ENCODE measurements at regions of chr1 and their contacts with region 1.

Region 1: GRCh38 chr1:179081687-179082332 is at the start of gene TOR3A:
- DNase-seq: peak; percentile 82
- H3K4me3 ChIP-seq: peak within 1 kb of the TSS; percentile 84
- H3K27ac ChIP-seq: peak within 1 kb of the TSS; percentile 72
- H3K4me1 ChIP-seq: peaks cover 6% of the 10 kb centered on the region
- H3K27me3 ChIP-seq: no peaks in the 10 kb centered on the region
- CTCF ChIP-seq: no peak
- total RNA-seq, gene TOR3A: 18.0 and 21.0 TPM in 2 replicates

Region 2: DNA sequence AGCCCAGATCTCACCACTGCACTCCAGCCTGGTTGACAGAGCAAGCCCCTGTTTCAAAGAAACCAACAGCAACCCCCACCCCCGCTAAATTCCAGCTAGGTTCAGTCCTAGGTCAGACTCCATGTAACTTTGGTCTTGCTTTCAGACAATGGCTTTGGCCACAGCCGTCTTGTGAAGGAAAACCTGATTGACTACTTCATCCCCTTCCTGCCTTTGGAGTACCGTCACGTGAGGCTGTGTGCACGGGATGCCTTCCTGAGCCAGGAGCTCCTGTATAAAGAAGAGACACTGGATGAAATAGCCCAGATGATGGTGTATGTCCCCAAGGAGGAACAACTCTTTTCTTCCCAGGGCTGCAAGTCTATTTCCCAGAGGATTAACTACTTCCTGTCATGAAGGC is 13.0 kb after region 1 on chr1:
- CTCF ChIA-PET with region 1: no interaction called
- POLR2A ChIA-PET with region 1: no interaction called
- intact Hi-C with region 1: no loop called
- DNase-seq: no peak
- H3K4me3 ChIP-seq: no peak overlapping the region
- H3K27ac ChIP-seq: no peak overlapping the region
- H3K4me1 ChIP-seq: peaks cover 17% of the 10 kb centered on the region
- H3K27me3 ChIP-seq: no peaks in the 10 kb centered on the region
- CTCF ChIP-seq: no peak

Region 3: DNA sequence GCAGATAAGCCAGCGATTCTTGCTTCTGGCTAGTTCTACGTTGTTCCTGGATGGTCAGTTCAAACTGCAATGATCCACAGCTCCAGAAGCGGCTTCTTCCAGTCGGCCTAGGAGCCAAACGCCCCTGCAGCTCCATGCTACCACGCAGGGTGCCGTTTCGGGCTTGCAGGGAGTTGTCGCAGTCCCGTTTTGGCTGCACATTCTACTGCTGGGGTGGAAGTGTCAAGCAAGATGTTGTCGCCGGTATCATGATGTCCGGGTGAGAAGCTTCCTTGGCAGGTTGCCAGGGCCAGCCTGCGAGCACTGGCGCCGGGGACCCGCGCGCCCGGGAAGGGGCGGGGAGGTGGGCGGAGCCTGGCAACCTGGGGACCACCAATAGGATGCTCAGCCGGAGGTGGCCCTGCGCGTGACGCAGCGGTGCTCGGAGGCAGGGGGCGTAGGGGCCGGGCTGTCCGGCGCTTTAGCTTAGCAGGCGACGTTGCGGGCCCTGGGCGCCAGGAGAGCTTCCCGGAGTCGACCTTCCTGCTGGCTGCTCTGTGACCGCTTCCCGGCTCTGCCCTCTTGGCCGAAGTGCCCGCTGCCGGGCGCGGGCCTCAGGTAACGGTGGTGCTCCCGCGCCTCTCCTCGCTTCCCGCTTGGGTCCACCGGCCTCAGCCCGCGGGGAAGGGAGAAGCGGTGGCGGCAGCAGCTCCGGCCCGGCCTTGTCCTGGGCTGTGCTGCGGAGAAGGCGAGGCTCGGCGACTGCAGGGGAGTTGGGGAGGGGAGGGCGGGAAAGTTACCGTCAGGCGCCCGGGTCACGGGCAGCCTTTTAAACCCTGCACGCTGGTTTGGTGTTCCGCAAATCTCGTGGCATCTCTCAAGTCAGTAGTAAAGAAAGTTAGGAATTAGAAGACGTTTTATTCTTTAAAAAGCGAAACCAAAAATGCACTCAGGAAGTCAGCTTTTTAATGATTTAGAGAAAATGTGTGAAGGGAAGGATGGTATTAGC is 211.8 kb after region 1 on chr1 and contains the start of gene SOAT1:
- CTCF ChIA-PET with region 1: no interaction called
- POLR2A ChIA-PET with region 1: no interaction called
- intact Hi-C with region 1: loop called (anchors 2 kb)
- DNase-seq: peak; percentile 95
- H3K4me3 ChIP-seq: peak within 1 kb of the TSS; percentile 66
- H3K27ac ChIP-seq: peak within 1 kb of the TSS; percentile 83
- H3K4me1 ChIP-seq: peaks cover 9% of the 10 kb centered on the region
- H3K27me3 ChIP-seq: no peaks in the 10 kb centered on the region
- CTCF ChIP-seq: no peak
- total RNA-seq, gene SOAT1: 49.9 and 53.0 TPM in 2 replicates

Region 4: DNA sequence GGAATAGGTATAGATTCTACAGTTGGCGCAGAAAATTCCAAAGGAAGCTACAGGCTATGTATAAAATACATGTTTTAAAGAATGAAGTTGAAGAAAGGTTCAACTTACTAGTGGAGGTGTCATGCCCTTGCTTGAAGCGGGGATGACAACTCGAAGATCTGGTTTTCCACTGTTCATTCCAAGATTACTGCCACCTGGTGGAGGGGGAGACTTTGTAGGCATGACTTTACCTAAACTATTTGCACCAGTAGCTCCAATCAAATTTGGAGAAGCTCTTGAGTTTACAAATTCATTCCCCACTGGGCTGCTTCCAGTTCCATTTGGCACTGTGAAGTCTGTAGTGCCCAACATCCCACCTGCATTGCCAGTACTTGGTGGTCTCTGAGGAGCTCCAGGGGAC is 365.7 kb after region 1 on chr1:
- CTCF ChIA-PET with region 1: no interaction called
- POLR2A ChIA-PET with region 1: no interaction called
- intact Hi-C with region 1: loop called (anchors 5 kb)
- DNase-seq: peak; percentile 55
- H3K4me3 ChIP-seq: no peak overlapping the region
- H3K27ac ChIP-seq: no peak overlapping the region
- H3K4me1 ChIP-seq: no peaks in the 10 kb centered on the region
- H3K27me3 ChIP-seq: no peaks in the 10 kb centered on the region
- CTCF ChIP-seq: peak; percentile 52

Region 5: DNA sequence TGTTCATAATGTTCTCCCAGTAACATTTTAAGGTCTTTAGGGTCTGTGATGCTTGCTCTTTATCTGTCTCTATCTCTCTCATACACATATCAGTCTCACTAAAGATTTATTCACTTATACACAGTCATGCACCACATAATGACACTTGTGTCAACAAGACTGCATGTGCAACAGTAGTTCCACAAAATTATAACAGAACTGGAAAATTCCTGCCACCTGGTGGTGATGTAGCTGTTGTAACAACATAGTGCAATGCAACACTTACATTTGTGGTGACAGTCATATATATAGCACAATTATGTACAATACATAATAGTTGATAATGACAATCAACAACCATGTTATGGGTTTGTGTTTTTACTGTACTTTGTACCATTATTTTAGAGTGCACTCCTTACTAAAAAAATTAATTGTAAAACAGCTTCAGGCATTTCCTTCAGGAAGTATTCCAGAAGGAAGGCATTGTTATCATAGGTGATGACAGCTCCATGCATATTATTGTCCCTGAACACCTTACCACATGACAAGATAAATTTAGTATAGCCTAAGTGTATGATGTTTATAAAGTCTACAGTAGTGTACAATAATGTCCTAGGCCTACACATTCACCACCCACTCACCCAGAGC is 517.9 kb after region 1 on chr1:
- CTCF ChIA-PET with region 1: no interaction called
- POLR2A ChIA-PET with region 1: no interaction called
- intact Hi-C with region 1: loop called (anchors 10 kb)
- DNase-seq: peak; percentile 51
- H3K4me3 ChIP-seq: no peak overlapping the region
- H3K27ac ChIP-seq: no peak overlapping the region
- H3K4me1 ChIP-seq: no peaks in the 10 kb centered on the region
- H3K27me3 ChIP-seq: peaks cover 23% of the 10 kb centered on the region
- CTCF ChIP-seq: peak; percentile 71